ENCODE measurements at regions of chr5 and their contacts with region 1.

Region 1: GRCh38 chr5:150161242-150162141 is 5.1 kb upstream of the CDX1 start:
- DNase-seq: peak; percentile 88
- ATAC-seq: peak; percentile 93
- H3K4me3 Mint-ChIP-seq: no peak overlapping the region
- H3K27ac Mint-ChIP-seq: no peak overlapping the region
- H3K4me1 Mint-ChIP-seq: peaks cover 4% of the 10 kb centered on the region
- H3K27me3 Mint-ChIP-seq: peaks cover 21% of the 10 kb centered on the region

Region 2: GRCh38 chr5:150148117-150148927 is 13.2 kb before region 1 on chr5:
- CTCF ChIA-PET with region 1: interaction called, 12 read pairs
- DNase-seq: no peak
- ATAC-seq: no peak
- H3K4me3 Mint-ChIP-seq: peak overlapping the region; percentile 10
- H3K27ac Mint-ChIP-seq: peak overlapping the region; percentile 93
- H3K4me1 Mint-ChIP-seq: peaks cover 77% of the 10 kb centered on the region
- H3K27me3 Mint-ChIP-seq: no peaks in the 10 kb centered on the region

Region 3: DNA sequence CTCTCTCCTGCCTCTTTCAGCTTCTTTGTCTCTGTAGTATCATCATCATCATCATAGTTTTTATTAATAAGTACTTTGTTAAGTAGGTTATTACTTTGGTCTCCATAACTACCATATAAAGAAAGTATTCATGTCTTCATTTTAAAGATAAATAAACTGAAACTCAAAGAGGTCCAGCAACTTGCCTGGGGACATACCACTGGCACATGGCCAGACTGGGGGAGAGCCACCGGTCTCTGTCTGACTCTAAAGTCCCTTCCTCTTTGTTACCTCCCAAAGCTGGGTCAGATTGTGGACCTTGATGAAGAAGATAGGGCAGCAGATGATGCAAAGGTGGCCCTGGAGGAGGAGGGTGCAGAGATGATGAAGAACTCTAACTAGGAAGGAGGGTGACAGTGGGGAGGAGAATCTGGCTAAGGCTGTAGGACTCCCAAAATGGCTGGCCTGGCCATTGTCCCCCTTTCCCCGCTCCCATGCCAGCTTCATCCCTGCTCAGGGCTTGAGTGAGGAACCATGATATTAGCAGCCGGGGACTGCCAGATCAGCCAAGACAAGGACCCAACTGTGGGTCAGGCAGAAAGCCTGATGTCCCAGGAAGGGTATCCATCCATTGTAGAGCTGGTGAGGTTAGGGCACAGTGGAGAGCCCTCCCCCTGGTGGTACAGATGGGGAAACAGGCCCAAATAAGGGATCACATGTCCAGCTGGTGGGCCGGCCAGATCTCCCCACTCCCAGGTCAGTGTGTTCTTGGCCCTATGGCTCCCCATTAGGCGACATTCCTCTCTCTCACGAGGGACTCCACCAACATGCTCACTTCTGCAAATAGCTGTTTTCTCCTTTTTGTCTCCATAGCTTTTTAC is 13.8 kb after region 1 on chr5:
- CTCF ChIA-PET with region 1: interaction called, 20 read pairs
- DNase-seq: no peak
- ATAC-seq: peak; percentile 61
- H3K4me3 Mint-ChIP-seq: no peak overlapping the region
- H3K27ac Mint-ChIP-seq: no peak overlapping the region
- H3K4me1 Mint-ChIP-seq: no peaks in the 10 kb centered on the region
- H3K27me3 Mint-ChIP-seq: peaks cover 38% of the 10 kb centered on the region

Region 4: GRCh38 chr5:150217873-150218692 is 56.6 kb after region 1 on chr5:
- CTCF ChIA-PET with region 1: interaction called, 13 read pairs
- DNase-seq: peak; percentile 90
- ATAC-seq: peak; percentile 98
- H3K4me3 Mint-ChIP-seq: no peak overlapping the region
- H3K27ac Mint-ChIP-seq: no peak overlapping the region
- H3K4me1 Mint-ChIP-seq: no peaks in the 10 kb centered on the region
- H3K27me3 Mint-ChIP-seq: peaks cover 30% of the 10 kb centered on the region

Region 5: GRCh38 chr5:150350524-150351344 is 189.2 kb after region 1 on chr5:
- CTCF ChIA-PET with region 1: interaction called, 10 read pairs
- DNase-seq: peak; percentile 80
- ATAC-seq: peak; percentile 93
- H3K4me3 Mint-ChIP-seq: no peak overlapping the region
- H3K27ac Mint-ChIP-seq: peak overlapping the region; percentile 58
- H3K4me1 Mint-ChIP-seq: peaks cover 28% of the 10 kb centered on the region
- H3K27me3 Mint-ChIP-seq: peaks cover 4% of the 10 kb centered on the region

Region 6: DNA sequence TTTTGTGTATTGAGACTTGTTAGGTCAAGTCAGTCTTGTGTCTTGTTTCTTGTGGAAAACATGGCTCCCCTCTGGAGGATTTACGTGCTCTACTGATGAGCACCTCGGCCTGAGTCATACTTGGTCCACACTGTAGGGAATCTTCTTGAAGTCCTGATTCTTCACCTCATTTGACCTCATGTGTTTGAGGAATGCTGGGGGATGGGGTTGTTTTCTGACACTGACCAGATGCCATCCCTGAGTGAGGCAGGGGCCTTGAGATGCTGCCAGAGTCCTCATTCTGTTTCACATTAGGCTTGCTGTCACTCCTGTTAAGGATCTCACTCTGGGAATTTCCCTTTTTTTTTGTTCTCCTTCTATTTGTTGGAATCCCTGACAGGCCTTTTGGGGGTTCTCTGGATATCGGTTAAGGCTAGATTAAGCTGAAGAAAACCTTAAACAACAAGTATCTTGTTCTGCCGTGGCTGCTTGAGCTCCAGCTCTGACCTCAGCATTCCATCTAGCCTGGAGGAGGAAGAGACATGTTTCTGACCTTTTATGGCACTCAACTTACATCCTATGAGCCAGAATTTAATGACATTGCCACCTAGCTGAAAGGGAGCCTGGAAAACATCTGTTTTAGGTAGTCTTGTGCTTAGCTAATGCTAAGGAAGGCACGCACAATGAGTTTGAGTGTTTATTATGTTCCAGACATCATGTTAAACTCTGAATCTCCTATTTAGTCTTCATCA is 216.6 kb after region 1 on chr5:
- CTCF ChIA-PET with region 1: no interaction called
- DNase-seq: no peak
- ATAC-seq: no peak
- H3K4me3 Mint-ChIP-seq: no peak overlapping the region
- H3K27ac Mint-ChIP-seq: peak overlapping the region; percentile 44
- H3K4me1 Mint-ChIP-seq: peaks cover 8% of the 10 kb centered on the region
- H3K27me3 Mint-ChIP-seq: no peaks in the 10 kb centered on the region